ENCODE measurements at regions of chr5 and their contacts with region 1.

Region 1: GRCh38 chr5:55037046-55037771 is 13.2 kb downstream of the GZMK start:
- DNase-seq: peak; percentile 34 to 76 (median 44)
- H3K4me3 ChIP-seq: peak overlapping the region; percentile 30
- H3K4me3 Mint-ChIP-seq: peak overlapping the region; percentile 3 to 73 (median 63)
- H3K27ac ChIP-seq: peak overlapping the region; percentile 20
- H3K27ac Mint-ChIP-seq: peak overlapping the region; percentile 88 to 95 (median 92)
- H3K4me1 ChIP-seq: peaks cover 31% of the 10 kb centered on the region
- H3K4me1 Mint-ChIP-seq: peaks cover 55 to 68% (median 62%) of the 10 kb centered on the region in 3 donors
- H3K27me3 ChIP-seq: no peaks in the 10 kb centered on the region
- H3K27me3 Mint-ChIP-seq: no peaks in the 10 kb centered on the region

Region 2: GRCh38 chr5:54703133-54703532 is 334.1 kb before region 1 on chr5:
- CTCF ChIA-PET with region 1: no interaction called
- POLR2A ChIA-PET with region 1: no interaction called
- DNase-seq: no peak
- H3K4me3 ChIP-seq: no peak overlapping the region
- H3K4me3 Mint-ChIP-seq: no peak overlapping the region
- H3K27ac ChIP-seq: no peak overlapping the region
- H3K27ac Mint-ChIP-seq: no peak overlapping the region
- H3K4me1 ChIP-seq: no peaks in the 10 kb centered on the region
- H3K4me1 Mint-ChIP-seq: peaks cover 6 to 8% (median 8%) of the 10 kb centered on the region in 3 donors
- H3K27me3 ChIP-seq: no peaks in the 10 kb centered on the region
- H3K27me3 Mint-ChIP-seq: peaks cover 0 to 1% of the 10 kb centered on the region in 2 donors

Region 3: GRCh38 chr5:54936201-54936600 is 101.0 kb before region 1 on chr5:
- CTCF ChIA-PET with region 1: no interaction called
- POLR2A ChIA-PET with region 1: no interaction called
- DNase-seq: no peak
- H3K4me3 ChIP-seq: no peak overlapping the region
- H3K4me3 Mint-ChIP-seq: no peak overlapping the region
- H3K27ac ChIP-seq: no peak overlapping the region
- H3K27ac Mint-ChIP-seq: no peak overlapping the region
- H3K4me1 ChIP-seq: no peaks in the 10 kb centered on the region
- H3K4me1 Mint-ChIP-seq: no peaks in the 10 kb centered on the region
- H3K27me3 ChIP-seq: no peaks in the 10 kb centered on the region
- H3K27me3 Mint-ChIP-seq: peaks cover 4 to 7% of the 10 kb centered on the region in 2 donors

Region 4: DNA sequence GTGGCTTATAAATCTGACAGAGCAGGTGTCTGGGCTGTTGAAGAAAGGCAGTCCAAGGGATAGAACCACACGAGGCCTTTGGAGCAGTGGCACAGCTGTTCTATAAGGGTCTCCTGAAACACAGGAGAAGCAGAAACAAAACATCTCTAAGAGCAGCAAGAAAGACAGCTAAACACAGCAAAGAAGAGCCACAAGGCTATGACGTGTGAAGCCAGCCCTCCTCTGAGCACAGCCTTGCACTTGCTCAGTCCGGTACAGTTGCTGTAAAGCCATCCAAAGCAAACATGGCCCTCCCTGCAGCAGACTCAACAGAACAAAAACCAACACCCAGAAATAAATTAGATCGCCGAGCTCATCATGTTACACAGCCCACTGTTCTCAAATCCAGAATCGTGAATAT is 15.8 kb before region 1 on chr5:
- CTCF ChIA-PET with region 1: interaction called, 16 read pairs
- POLR2A ChIA-PET with region 1: interaction called, 26 read pairs
- DNase-seq: peak in 2 of 5 donors; percentile 14 to 52
- H3K4me3 ChIP-seq: peak overlapping the region; percentile 7
- H3K4me3 Mint-ChIP-seq: peak overlapping the region; percentile 68 to 90 (median 83)
- H3K27ac ChIP-seq: no peak overlapping the region
- H3K27ac Mint-ChIP-seq: peak overlapping the region; percentile 66 to 97 (median 84)
- H3K4me1 ChIP-seq: peaks cover 32% of the 10 kb centered on the region
- H3K4me1 Mint-ChIP-seq: peaks cover 50 to 69% (median 58%) of the 10 kb centered on the region in 3 donors
- H3K27me3 ChIP-seq: no peaks in the 10 kb centered on the region
- H3K27me3 Mint-ChIP-seq: peaks cover 0 to 3% of the 10 kb centered on the region in 2 donors

Region 5: DNA sequence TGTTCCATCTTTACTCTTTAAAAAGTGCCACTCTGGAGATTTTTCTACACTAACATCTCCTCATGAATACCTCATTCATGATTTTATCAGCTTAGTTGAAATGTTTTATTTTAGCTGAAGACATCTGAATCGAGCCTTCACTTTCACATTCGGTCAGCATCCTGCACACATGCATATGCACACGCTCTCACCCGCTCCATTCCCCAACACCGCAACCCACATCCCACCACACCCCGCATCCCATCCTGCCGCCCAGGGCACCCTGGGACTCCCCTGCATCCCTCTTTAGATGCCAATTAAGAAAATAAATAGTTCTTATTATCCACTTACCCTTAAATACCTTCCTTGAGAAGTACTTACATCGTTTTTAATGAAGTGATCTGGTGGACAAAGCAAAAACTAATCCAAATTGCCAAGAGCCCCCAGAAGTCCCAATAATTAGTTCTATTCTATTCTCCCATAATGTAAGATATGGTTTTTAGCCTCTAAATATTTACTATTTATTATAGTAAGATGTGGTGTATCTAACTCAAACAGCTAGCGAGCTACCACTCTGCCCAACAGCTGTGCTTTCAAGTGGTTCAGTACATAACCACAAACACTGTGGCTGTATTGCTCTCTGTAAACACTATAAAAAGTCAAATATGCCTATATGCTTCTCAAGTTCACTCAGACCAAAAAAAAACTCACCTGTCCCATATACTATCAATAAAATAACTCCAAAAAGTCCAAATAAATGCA is 25.0 kb after region 1 on chr5:
- CTCF ChIA-PET with region 1: interaction called, 9 read pairs
- POLR2A ChIA-PET with region 1: interaction called, 10 read pairs
- DNase-seq: peak; percentile 24 to 72 (median 38)
- H3K4me3 ChIP-seq: peak overlapping the region; percentile 53
- H3K4me3 Mint-ChIP-seq: peak overlapping the region; percentile 77 to 96 (median 87)
- H3K27ac ChIP-seq: peak overlapping the region; percentile 8
- H3K27ac Mint-ChIP-seq: peak overlapping the region; percentile 74 to 95 (median 88)
- H3K4me1 ChIP-seq: peaks cover 37% of the 10 kb centered on the region
- H3K4me1 Mint-ChIP-seq: peaks cover 58 to 83% (median 69%) of the 10 kb centered on the region in 3 donors
- H3K27me3 ChIP-seq: no peaks in the 10 kb centered on the region
- H3K27me3 Mint-ChIP-seq: no peaks in the 10 kb centered on the region